Heart right ventricle (tissue), 16 donors: ENCODE measurements at regions of chr3 and their contacts with region 1.

Region 1: DNA sequence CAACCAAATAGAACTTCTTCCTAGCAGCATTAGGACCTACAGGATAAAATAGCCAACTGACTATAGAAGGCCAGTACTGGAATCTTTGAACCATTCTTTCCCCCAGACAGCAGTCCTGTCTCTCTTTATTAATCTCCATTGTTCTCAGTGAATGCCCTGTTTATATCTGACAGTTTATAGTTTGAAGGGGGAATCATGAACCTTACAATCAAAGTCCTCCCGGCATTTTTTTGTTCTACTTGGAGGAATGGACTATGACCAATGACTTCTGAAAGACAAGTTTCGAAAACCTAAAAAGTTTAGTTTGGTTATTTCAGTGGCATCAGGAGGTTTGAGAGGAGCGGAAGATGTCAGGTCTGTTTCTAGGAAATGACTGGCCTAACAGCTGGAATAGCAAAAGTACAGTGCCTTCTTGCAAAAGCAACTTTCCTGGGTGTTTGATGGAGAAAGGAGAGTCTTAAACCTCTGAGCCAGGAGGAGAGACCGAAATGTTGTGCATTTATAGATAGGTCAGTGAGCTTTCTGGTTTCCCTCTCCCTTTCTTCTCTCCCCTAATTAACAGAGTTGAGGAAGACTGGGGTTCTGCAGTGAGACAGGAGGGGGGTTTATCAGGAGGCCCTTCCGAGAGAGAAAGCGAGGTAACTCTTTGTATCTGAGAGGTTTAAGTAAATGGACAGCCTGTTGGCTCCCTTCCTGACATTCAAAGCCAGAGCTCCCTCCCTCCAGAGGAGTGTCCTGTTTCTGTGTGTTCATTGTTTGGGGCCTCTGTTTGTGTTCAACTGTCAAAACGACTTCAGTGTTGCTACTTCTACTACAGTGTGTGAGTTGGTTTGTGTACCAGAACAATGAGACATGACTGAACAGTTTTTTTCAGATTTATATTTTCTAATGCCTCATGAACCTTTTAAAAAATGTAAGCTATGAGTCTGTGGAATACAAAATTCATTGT is 383.0 kb upstream of the RARB start:
- DNase-seq: peak in 1 of 2 donors; percentile 29
- ATAC-seq: peak; percentile 56 to 91 (median 85)
- H3K4me3 ChIP-seq: no peak overlapping the region
- H3K27ac ChIP-seq: peak overlapping the region in 9 of 10 donors; percentile 7 to 72 (median 24)
- H3K4me1 ChIP-seq: peaks cover 0 to 59% (median 27%) of the 10 kb centered on the region in 9 donors
- H3K27me3 ChIP-seq: no peaks in the 10 kb centered on the region
- CTCF ChIP-seq: no peak

Region 2: GRCh38 chr3:25156626-25157025 is 111.6 kb after region 1 on chr3:
- intact Hi-C with region 1: loop called in 1 of 10 experiments (anchors 10 kb)
- DNase-seq: peak in 1 of 2 donors; percentile 5
- ATAC-seq: peak; percentile 62 to 97 (median 83)
- H3K4me3 ChIP-seq: no peak overlapping the region
- H3K27ac ChIP-seq: peak overlapping the region in 4 of 10 donors; percentile 25 to 46 (median 32)
- H3K4me1 ChIP-seq: peaks cover 0 to 21% (median 7%) of the 10 kb centered on the region in 9 donors
- H3K27me3 ChIP-seq: no peaks in the 10 kb centered on the region
- CTCF ChIP-seq: no peak

Region 3: GRCh38 chr3:25339225-25339624 is 294.2 kb after region 1 on chr3:
- intact Hi-C with region 1: no loop called
- DNase-seq: no peak
- ATAC-seq: no peak
- H3K4me3 ChIP-seq: no peak overlapping the region
- H3K27ac ChIP-seq: no peak overlapping the region
- H3K4me1 ChIP-seq: peaks cover 0 to 3% (median 0%) of the 10 kb centered on the region in 9 donors
- H3K27me3 ChIP-seq: no peaks in the 10 kb centered on the region
- CTCF ChIP-seq: no peak